HepG2 (cell line): ENCODE measurements at regions of chr3 and their contacts with region 1.

Region 1: GRCh38 chr3:108090701-108091451 is at the start of gene CD47:
- DNase-seq: peak; percentile 41
- ATAC-seq: peak; percentile 89
- H3K4me3 ChIP-seq: peak within 1 kb of the TSS; percentile 54 to 79 (median 72)
- H3K27ac ChIP-seq: no peak within 1 kb of the TSS
- H3K4me1 ChIP-seq: peaks cover 9% of the 10 kb centered on the region
- H3K27me3 ChIP-seq: peaks cover 0 to 11% of the 10 kb centered on the region in 2 experiments; a peak in 2 of 5 replicates
- CTCF ChIP-seq: no peak
- EP300 ChIP-seq: no peak
- POLR2A ChIP-seq: no peak; a peak in 1 of 4 replicates
- RAD21 ChIP-seq: no peak
- total RNA-seq, gene CD47: 3.1 and 6.5 TPM in 2 replicates

Region 2: GRCh38 chr3:108125550-108126071 is 34.7 kb after region 1 on chr3:
- CTCF ChIA-PET with region 1: no interaction called
- POLR2A ChIA-PET with region 1: no interaction called
- in situ Hi-C with region 1: no loop called
- intact Hi-C with region 1: loop called (anchors 2 kb)
- DNase-seq: no peak
- ATAC-seq: no peak
- H3K4me3 ChIP-seq: no peak overlapping the region
- H3K27ac ChIP-seq: no peak overlapping the region
- H3K4me1 ChIP-seq: no peaks in the 10 kb centered on the region
- H3K27me3 ChIP-seq: no peaks in the 10 kb centered on the region; a peak in 3 of 5 replicates
- CTCF ChIP-seq: no peak
- EP300 ChIP-seq: no peak
- POLR2A ChIP-seq: no peak
- RAD21 ChIP-seq: no peak

Region 3: DNA sequence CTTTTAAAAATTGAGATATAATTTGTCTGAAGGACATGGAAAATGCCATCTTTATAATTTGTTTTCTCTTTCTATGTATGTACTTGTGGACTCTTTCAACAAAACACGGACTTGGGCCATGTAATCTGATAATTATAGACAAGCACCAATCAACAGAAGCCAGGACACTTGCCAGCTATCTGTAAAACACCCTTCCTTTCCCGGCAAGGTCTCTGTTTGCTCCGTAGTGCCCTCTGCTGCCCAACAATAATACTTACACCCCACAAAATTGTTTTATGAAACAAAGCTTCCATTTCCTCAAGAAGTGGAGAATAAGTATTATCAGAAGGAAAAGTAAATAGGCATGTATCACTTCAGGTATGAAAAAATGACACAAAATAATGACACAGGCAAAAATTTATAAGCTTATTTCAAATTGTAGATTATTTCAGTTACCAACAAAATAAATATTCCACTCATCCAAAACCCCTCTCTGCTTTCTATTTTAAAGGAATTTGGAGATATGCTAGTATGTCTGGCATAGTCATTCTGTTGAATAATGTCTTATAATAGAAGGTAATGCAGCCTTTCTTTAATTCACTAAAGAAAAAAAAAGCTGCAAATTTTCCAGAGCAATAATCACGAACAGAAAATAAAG is 386.8 kb after region 1 on chr3:
- CTCF ChIA-PET with region 1: no interaction called
- POLR2A ChIA-PET with region 1: no interaction called
- in situ Hi-C with region 1: no loop called
- intact Hi-C with region 1: loop called (anchors 10 kb)
- DNase-seq: peak; percentile 52
- ATAC-seq: peak; percentile 80
- H3K4me3 ChIP-seq: no peak overlapping the region
- H3K27ac ChIP-seq: no peak overlapping the region
- H3K4me1 ChIP-seq: no peaks in the 10 kb centered on the region
- H3K27me3 ChIP-seq: no peaks in the 10 kb centered on the region; a peak in 1 of 5 replicates
- CTCF ChIP-seq: peak; percentile 71
- EP300 ChIP-seq: no peak
- POLR2A ChIP-seq: no peak
- RAD21 ChIP-seq: no peak